CD4-positive, alpha-beta memory T cell (primary cell): ENCODE measurements at regions of chr21 and their contacts with region 1.

Region 1: GRCh38 chr21:17819114-17819876 is at the start of gene C21orf91:
- DNase-seq: peak; percentile 91 to 93 (median 92)
- H3K4me3 ChIP-seq: peak within 1 kb of the TSS; percentile 70 to 92
- H3K4me3 Mint-ChIP-seq: peak within 1 kb of the TSS; percentile 89 to 100 (median 98)
- H3K27ac ChIP-seq: peak within 1 kb of the TSS; percentile 96
- H3K27ac Mint-ChIP-seq: peak within 1 kb of the TSS; percentile 97 to 100 (median 100)
- H3K4me1 ChIP-seq: peaks cover 48% of the 10 kb centered on the region
- H3K4me1 Mint-ChIP-seq: peaks cover 31 to 53% (median 42%) of the 10 kb centered on the region in 4 donors
- H3K27me3 ChIP-seq: no peaks in the 10 kb centered on the region
- H3K27me3 Mint-ChIP-seq: no peaks in the 10 kb centered on the region
- total RNA-seq, gene C21orf91: 80.1 to 80.5 TPM

Region 2: DNA sequence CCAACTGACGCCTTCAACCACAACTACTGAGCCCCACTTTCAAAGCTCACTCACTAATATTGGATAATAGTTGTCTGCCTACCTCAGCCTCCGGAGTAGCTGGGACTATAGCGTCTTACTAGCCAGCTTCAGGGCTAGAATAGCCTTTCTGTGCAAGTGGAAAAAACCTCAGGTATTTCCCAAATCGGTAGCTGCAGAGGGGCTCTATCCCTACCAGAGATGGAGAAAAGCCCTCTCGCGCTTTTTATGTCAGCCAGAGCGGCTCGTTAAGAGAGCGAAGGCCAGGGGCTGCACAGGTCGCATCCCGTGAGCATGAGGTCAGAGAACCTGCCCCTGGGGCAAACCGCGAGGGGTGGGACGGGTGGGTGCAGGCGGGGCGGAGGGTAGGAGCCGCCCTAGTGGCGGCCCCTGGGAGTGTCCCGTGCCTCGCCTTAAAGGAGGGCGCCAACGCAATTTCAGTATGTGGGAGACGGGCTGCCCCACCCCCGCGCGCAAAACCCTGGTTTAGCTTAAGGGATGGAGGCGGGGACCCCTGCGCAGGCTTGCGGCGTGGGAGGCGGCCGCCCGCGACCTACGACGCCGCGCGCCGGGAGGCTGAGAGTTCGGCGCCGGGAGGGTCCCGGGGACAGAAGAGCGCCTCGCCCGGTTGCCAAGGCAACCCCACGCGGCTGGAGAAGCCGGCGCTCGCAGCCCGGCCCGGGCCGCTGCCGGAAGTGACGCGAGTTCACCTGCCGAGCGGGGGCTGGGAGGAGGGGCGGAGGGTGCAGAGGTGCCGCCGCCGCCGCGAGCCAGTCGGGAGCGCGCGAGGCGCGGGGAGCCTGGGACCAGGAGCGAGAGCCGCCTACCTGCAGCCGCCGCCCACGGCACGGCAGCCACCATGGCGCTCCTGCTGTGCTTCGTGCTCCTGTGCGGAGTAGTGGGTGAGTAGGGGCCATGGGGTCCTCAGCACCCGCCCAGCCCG is 306.8 kb before region 1 on chr21 and contains the start of gene CXADR:
- CTCF ChIA-PET with region 1: no interaction called
- POLR2A ChIA-PET with region 1: no interaction called
- intact Hi-C with region 1: loop called (anchors 10 kb)
- DNase-seq: peak; percentile 81 to 84 (median 82)
- H3K4me3 ChIP-seq: peak within 1 kb of the TSS; percentile 28 to 50
- H3K4me3 Mint-ChIP-seq: peak within 1 kb of the TSS; percentile 85 to 94 (median 90)
- H3K27ac ChIP-seq: peak within 1 kb of the TSS; percentile 34
- H3K27ac Mint-ChIP-seq: peak within 1 kb of the TSS; percentile 57 to 88 (median 75)
- H3K4me1 ChIP-seq: peaks cover 18% of the 10 kb centered on the region
- H3K4me1 Mint-ChIP-seq: peaks cover 12 to 21% (median 17%) of the 10 kb centered on the region in 4 donors
- H3K27me3 ChIP-seq: no peaks in the 10 kb centered on the region
- H3K27me3 Mint-ChIP-seq: peaks cover 5 to 6% of the 10 kb centered on the region in 2 donors
- total RNA-seq, gene CXADR: 0.64 to 1.4 TPM

Region 3: DNA sequence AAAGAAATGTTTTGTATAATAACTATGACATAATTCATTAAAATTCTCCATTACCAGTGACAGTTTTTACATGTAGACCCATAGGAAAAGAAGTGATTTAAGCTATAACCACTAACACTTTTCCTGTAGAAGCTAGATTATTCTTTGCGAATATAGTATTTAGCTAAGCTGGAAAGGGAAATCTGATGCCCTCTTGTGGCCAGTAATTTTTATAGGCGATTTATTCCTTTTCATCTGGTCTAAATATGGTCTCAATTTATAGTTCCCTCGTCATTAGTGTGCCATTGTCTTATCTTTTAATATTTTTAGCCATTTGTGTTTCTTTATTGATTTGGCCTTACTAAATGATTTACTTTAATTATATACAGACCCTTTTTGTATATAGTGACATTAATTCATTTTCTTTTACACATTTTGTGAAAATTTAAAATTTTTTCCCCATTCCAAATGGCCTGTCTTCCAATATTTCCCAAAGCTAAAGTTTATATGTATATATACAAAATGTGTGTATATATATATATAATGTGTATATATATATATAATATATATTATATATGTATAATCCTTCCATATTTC is 233.3 kb before region 1 on chr21:
- CTCF ChIA-PET with region 1: no interaction called
- POLR2A ChIA-PET with region 1: no interaction called
- intact Hi-C with region 1: no loop called
- DNase-seq: peak in 4 of 5 donors; percentile 34 to 45 (median 40)
- H3K4me3 ChIP-seq: no peak overlapping the region
- H3K4me3 Mint-ChIP-seq: no peak overlapping the region
- H3K27ac ChIP-seq: no peak overlapping the region
- H3K27ac Mint-ChIP-seq: no peak overlapping the region
- H3K4me1 ChIP-seq: no peaks in the 10 kb centered on the region
- H3K4me1 Mint-ChIP-seq: no peaks in the 10 kb centered on the region
- H3K27me3 ChIP-seq: no peaks in the 10 kb centered on the region
- H3K27me3 Mint-ChIP-seq: no peaks in the 10 kb centered on the region

Region 4: DNA sequence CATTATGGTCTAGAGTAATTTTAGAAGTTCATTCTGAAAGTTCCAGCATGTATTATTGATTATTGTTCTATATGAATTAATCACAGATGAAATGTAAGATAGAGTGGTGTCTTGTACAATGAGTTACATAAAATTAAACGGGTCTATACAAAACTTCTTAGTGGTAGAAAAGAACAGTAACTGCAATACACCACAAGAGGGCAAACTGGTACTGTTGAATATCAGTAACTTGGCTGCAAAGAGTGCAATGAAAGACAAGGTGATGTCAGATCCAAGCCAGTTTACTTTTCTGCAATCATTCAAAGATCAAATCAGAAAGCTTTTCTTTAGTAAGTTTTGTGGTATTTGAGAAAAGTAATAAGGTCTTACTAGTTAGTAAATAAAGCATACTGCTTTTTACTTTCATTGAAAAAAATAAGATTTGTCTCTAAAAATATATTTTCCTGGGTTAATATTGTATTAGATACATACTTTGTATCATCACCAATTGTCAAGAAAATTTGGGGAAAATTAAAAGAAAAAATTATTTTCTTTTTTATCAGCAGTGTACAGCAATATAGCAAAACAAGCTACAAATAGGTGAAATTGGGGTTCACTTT is 140.2 kb before region 1 on chr21:
- CTCF ChIA-PET with region 1: interaction called, 17 read pairs
- POLR2A ChIA-PET with region 1: interaction called, 9 read pairs
- intact Hi-C with region 1: loop called (anchors 1 kb)
- DNase-seq: peak; percentile 40 to 70 (median 66)
- H3K4me3 ChIP-seq: no peak overlapping the region
- H3K4me3 Mint-ChIP-seq: no peak overlapping the region
- H3K27ac ChIP-seq: no peak overlapping the region
- H3K27ac Mint-ChIP-seq: no peak overlapping the region
- H3K4me1 ChIP-seq: no peaks in the 10 kb centered on the region
- H3K4me1 Mint-ChIP-seq: no peaks in the 10 kb centered on the region
- H3K27me3 ChIP-seq: no peaks in the 10 kb centered on the region
- H3K27me3 Mint-ChIP-seq: no peaks in the 10 kb centered on the region

Region 5: GRCh38 chr21:17780539-17780938 is 38.8 kb before region 1 on chr21:
- CTCF ChIA-PET with region 1: interaction called, 27 read pairs
- POLR2A ChIA-PET with region 1: interaction called, 124 read pairs
- intact Hi-C with region 1: loop called (anchors 1 kb)
- DNase-seq: peak; percentile 61 to 91 (median 66)
- H3K4me3 ChIP-seq: peak overlapping the region in 1 of 2 donors; percentile 2
- H3K4me3 Mint-ChIP-seq: peak overlapping the region in 7 of 8 donors; percentile 40 to 90 (median 66)
- H3K27ac ChIP-seq: peak overlapping the region; percentile 67
- H3K27ac Mint-ChIP-seq: peak overlapping the region; percentile 87 to 97 (median 97)
- H3K4me1 ChIP-seq: peaks cover 82% of the 10 kb centered on the region
- H3K4me1 Mint-ChIP-seq: peaks cover 72 to 89% (median 81%) of the 10 kb centered on the region in 4 donors
- H3K27me3 ChIP-seq: no peaks in the 10 kb centered on the region
- H3K27me3 Mint-ChIP-seq: no peaks in the 10 kb centered on the region

Region 6: DNA sequence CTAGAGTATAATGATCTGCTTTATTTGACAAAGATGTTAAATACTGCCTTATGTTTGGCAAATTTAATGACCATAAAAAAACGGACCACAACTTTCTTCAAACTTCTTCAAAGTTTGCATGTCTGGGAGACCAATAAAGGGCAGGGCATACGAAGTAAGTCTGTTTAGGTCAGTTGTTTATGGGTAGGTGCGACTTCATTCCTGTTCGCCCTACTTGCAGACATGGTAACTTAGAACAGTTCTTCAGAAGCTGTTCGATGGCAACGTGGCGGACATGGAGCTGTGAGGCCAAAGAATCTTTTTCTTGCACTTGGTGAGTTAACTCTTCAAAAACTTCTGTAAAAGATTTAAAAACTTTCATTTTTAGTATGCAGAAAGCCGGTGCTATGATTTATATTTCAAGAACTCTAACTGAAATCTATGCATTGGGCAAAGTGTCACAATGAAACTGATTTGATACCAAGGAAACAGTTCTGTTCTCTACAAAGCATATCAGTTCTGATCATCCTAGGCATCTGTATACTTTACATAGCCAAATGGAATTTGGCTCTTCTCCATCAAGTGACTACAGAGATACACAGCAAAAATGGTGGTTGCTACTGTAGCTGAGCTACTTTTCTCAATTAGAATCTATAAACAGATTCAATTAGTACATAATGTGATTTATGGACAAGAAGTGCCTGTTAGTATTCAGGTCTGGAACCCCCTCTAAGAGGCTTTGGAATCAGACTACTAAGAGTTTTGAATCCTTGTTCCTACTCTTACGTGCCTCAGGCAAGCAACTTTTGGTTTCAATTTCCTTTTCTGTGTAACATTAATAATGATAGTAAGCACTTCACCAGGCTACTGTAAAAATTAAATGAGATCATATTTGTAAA is 25.8 kb before region 1 on chr21:
- CTCF ChIA-PET with region 1: interaction called, 7 read pairs
- POLR2A ChIA-PET with region 1: interaction called, 62 read pairs
- intact Hi-C with region 1: loop called (anchors 1 kb)
- DNase-seq: peak in 4 of 5 donors; percentile 59 to 66 (median 60)
- H3K4me3 ChIP-seq: peak overlapping the region; percentile 20 to 72
- H3K4me3 Mint-ChIP-seq: peak overlapping the region; percentile 60 to 92 (median 83)
- H3K27ac ChIP-seq: peak overlapping the region; percentile 94
- H3K27ac Mint-ChIP-seq: peak overlapping the region; percentile 87 to 97 (median 92)
- H3K4me1 ChIP-seq: peaks cover 92% of the 10 kb centered on the region
- H3K4me1 Mint-ChIP-seq: peaks cover 49 to 78% (median 57%) of the 10 kb centered on the region in 4 donors
- H3K27me3 ChIP-seq: no peaks in the 10 kb centered on the region
- H3K27me3 Mint-ChIP-seq: no peaks in the 10 kb centered on the region

Region 7: GRCh38 chr21:17903029-17903806 is 83.9 kb after region 1 on chr21:
- CTCF ChIA-PET with region 1: interaction called, 4 read pairs
- POLR2A ChIA-PET with region 1: no interaction called
- intact Hi-C with region 1: loop called (anchors 1 kb)
- DNase-seq: peak in 4 of 5 donors; percentile 52 to 57 (median 56)
- H3K4me3 ChIP-seq: no peak overlapping the region
- H3K4me3 Mint-ChIP-seq: no peak overlapping the region
- H3K27ac ChIP-seq: no peak overlapping the region
- H3K27ac Mint-ChIP-seq: no peak overlapping the region
- H3K4me1 ChIP-seq: peaks cover 5% of the 10 kb centered on the region
- H3K4me1 Mint-ChIP-seq: peaks cover 5 to 7% (median 6%) of the 10 kb centered on the region in 4 donors
- H3K27me3 ChIP-seq: no peaks in the 10 kb centered on the region
- H3K27me3 Mint-ChIP-seq: no peaks in the 10 kb centered on the region